Activated naive CD4-positive, alpha-beta T cell treated with anti-CD3 and anti-CD28 coated beads, Interleukin-2, amount 10 ng/mL, durations not matched to agents 7 days and 5 days (primary cell): ENCODE measurements at regions of chr1 and their contacts with region 1.

Region 1: GRCh38 chr1:158998781-158999161 is 10.9 kb upstream of the IFI16 start:
- DNase-seq: peak; percentile 53
- H3K4me3 Mint-ChIP-seq: no peak overlapping the region
- H3K27ac Mint-ChIP-seq: no peak overlapping the region
- H3K4me1 Mint-ChIP-seq: peaks cover 37% of the 10 kb centered on the region
- H3K27me3 Mint-ChIP-seq: no peaks in the 10 kb centered on the region

Region 2: DNA sequence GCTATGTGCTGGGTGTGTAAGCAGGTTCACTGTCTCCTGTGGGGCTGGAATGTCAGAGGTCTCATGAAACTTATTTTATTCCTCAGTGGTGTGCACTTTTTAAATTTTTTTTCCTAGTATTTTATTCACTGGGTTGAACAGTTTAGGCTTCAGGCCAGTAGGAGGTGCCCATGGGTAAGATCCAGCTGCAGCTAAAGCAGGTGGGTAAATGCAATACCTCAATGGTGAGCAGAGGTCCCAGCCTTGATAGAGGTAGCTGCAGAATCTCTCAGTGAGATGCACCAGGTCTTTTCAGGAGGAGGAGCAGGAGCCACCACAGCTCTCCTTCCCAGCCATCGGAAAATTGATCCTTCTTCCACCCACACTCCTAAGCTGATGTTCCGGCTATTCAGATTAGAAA is 205.2 kb before region 1 on chr1:
- CTCF ChIA-PET with region 1: interaction called, 48 read pairs
- DNase-seq: peak; percentile 61
- H3K4me3 Mint-ChIP-seq: no peak overlapping the region
- H3K27ac Mint-ChIP-seq: peak overlapping the region; percentile 12
- H3K4me1 Mint-ChIP-seq: no peaks in the 10 kb centered on the region
- H3K27me3 Mint-ChIP-seq: peaks cover 23% of the 10 kb centered on the region

Region 3: GRCh38 chr1:158976207-158976606 is 22.6 kb before region 1 on chr1:
- CTCF ChIA-PET with region 1: interaction called, 10 read pairs
- DNase-seq: no peak
- H3K4me3 Mint-ChIP-seq: no peak overlapping the region
- H3K27ac Mint-ChIP-seq: no peak overlapping the region
- H3K4me1 Mint-ChIP-seq: peaks cover 6% of the 10 kb centered on the region
- H3K27me3 Mint-ChIP-seq: no peaks in the 10 kb centered on the region